Thyroid gland (tissue), 4 donors: ENCODE measurements at regions of chr2 and their contacts with region 1.

Region 1: DNA sequence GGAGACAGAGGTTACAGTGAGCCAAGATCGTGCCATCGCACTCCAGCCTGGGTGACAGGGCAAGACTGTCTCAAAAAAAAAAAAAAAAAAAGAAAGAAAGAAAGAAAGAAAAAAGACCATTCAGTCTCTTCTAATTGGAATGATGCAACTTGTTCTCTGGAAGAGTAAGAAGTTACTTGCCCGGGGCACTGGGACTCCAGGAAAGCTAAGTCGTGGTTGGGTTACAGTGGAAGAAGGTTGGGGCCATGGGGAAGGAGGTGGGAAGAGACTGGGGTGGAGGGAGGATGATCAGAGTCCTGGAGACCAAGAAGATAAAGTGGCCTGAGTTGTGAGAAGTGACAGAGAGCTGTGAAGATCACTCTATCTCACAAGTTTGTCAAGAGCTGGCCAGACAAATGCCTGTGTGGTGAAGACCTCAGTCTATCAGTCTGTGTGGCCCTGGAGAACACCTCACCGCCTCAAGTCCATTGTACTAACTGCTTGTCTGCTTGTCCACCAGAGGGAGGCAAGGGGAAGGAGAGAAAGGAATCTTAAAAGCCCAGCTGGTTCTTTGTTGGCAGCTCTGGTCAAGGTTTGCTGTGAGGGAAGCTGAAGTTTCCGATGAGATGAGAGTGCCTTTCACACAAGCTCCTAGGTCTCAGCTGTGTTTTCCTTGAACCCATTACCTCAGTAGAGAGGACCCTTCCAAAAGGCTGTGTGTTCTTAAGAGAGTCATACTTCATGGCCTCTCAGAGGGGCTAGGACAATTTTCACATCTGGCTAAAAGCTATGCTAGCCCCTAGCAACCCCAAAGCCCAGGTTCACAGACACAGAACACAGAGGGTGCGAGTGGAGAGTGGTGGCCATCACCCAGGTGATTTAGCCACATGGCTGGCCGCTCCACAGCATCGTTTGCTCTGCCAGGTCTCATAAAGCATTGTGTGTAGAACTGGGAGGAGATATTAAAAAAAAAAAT is 72.0 kb upstream of the TMEM178A start:
- DNase-seq: peak; percentile 54 to 61
- H3K4me3 ChIP-seq: no peak overlapping the region
- H3K27ac ChIP-seq: no peak overlapping the region
- H3K4me1 ChIP-seq: no peaks in the 10 kb centered on the region
- H3K27me3 ChIP-seq: no peaks in the 10 kb centered on the region
- CTCF ChIP-seq: peak; percentile 16 to 79 (median 66)
- POLR2A ChIP-seq: no peak

Region 2: DNA sequence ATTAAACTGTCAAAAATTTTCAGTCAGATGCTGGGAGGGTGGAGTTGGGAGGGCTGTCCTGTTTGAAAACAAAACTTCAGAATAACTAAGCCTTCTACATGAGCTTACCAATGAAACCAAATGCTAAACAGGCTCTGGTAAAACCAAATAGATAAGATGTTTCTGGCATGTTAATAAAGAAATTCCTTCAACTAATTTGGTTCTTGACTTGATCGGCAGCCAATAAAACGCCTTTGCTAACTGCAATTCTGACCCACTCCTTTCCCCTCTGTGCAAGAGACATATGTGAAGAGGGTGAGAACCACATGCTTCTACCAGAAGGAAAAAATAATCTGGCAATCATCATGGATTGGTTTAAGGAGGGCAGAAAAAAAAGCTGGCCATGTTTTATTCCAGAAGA is 177.6 kb before region 1 on chr2:
- intact Hi-C with region 1: no loop called
- DNase-seq: no peak
- H3K4me3 ChIP-seq: no peak overlapping the region
- H3K27ac ChIP-seq: no peak overlapping the region
- H3K4me1 ChIP-seq: peaks cover 36 to 44% of the 10 kb centered on the region in 2 donors
- H3K27me3 ChIP-seq: no peaks in the 10 kb centered on the region
- CTCF ChIP-seq: no peak
- POLR2A ChIP-seq: no peak

Region 3: DNA sequence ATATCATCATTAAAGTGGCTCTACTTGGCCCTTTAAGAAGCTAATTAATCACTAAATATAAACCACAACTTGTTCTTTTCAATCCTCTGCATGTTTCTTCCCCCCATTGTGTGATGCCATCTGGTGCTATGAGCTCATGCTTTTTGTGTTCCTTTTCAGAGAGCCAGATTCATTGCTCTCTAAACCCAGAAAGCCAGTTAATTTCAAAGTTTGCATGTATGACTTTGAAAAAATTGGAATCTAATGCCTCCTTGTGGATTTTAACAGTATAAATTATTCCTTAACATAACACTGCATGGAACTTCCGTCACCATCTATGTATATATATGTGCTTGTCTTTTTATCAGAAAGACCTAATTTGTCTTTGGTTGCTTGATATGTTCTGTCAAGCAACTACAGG is 103.1 kb after region 1 on chr2:
- intact Hi-C with region 1: loop called (anchors 10 kb)
- DNase-seq: no peak
- H3K4me3 ChIP-seq: no peak overlapping the region
- H3K27ac ChIP-seq: no peak overlapping the region
- H3K4me1 ChIP-seq: peaks cover 0 to 12% of the 10 kb centered on the region in 2 donors
- H3K27me3 ChIP-seq: no peaks in the 10 kb centered on the region
- CTCF ChIP-seq: peak in 4 of 6 experiments; percentile 15 to 64 (median 51)
- POLR2A ChIP-seq: no peak

Region 4: DNA sequence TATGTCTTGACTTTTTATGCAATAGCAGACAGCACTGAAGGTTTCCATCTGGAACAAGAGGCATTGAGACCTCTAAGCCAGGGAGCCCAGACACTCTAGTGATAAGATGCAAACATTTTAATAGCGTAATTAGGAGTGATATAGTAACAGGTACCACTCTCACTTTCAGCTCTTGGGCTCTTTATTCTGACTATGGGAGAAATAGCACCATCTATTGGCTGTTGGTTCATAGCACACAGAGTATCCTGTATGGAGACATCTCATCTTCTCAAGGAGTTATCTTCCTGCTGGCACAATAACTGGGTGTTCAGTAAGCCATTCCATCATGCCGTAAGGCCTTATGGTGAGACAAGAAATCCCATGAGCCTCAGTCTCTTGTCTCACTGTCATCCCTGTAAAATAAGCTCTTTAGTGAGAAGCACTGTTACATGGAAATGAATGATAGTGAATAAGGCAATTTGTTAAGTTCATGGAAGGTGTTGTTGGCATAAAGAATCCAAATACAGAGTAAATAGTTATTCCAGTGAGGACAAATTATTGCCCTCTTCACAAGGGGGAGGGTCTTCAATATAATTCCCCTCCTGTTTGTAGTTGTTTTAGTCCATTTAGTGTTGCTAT is 137.1 kb after region 1 on chr2:
- intact Hi-C with region 1: loop called (anchors 10 kb)
- DNase-seq: no peak
- H3K4me3 ChIP-seq: no peak overlapping the region
- H3K27ac ChIP-seq: no peak overlapping the region
- H3K4me1 ChIP-seq: no peaks in the 10 kb centered on the region
- H3K27me3 ChIP-seq: no peaks in the 10 kb centered on the region
- CTCF ChIP-seq: peak in 3 of 6 experiments; percentile 51 to 58 (median 53)
- POLR2A ChIP-seq: no peak